Caco-2 (cell line): ENCODE measurements at regions of chr4 and their contacts with region 1.

Region 1: GRCh38 chr4:6695660-6696630 is 2.3 kb downstream of the S100P start:
- DNase-seq: peak; percentile 92 to 94
- H3K4me3 ChIP-seq: no peak overlapping the region
- H3K4me3 Mint-ChIP-seq: peak overlapping the region; percentile 77
- H3K27ac Mint-ChIP-seq: peak overlapping the region; percentile 92
- H3K4me1 ChIP-seq: peaks cover 40% of the 10 kb centered on the region
- H3K4me1 Mint-ChIP-seq: peaks cover 42% of the 10 kb centered on the region
- H3K27me3 ChIP-seq: no peaks in the 10 kb centered on the region
- H3K27me3 Mint-ChIP-seq: no peaks in the 10 kb centered on the region
- CTCF ChIP-seq: peak in 1 of 2 experiments; percentile 18

Region 2: GRCh38 chr4:5563856-5564255 is 1132.1 kb before region 1 on chr4:
- CTCF ChIA-PET with region 1: no interaction called
- POLR2A ChIA-PET with region 1: no interaction called
- intact Hi-C with region 1: no loop called
- DNase-seq: no peak
- H3K4me3 ChIP-seq: no peak overlapping the region
- H3K4me3 Mint-ChIP-seq: no peak overlapping the region
- H3K27ac Mint-ChIP-seq: no peak overlapping the region
- H3K4me1 ChIP-seq: no peaks in the 10 kb centered on the region
- H3K4me1 Mint-ChIP-seq: no peaks in the 10 kb centered on the region
- H3K27me3 ChIP-seq: no peaks in the 10 kb centered on the region
- H3K27me3 Mint-ChIP-seq: no peaks in the 10 kb centered on the region
- CTCF ChIP-seq: no peak

Region 3: DNA sequence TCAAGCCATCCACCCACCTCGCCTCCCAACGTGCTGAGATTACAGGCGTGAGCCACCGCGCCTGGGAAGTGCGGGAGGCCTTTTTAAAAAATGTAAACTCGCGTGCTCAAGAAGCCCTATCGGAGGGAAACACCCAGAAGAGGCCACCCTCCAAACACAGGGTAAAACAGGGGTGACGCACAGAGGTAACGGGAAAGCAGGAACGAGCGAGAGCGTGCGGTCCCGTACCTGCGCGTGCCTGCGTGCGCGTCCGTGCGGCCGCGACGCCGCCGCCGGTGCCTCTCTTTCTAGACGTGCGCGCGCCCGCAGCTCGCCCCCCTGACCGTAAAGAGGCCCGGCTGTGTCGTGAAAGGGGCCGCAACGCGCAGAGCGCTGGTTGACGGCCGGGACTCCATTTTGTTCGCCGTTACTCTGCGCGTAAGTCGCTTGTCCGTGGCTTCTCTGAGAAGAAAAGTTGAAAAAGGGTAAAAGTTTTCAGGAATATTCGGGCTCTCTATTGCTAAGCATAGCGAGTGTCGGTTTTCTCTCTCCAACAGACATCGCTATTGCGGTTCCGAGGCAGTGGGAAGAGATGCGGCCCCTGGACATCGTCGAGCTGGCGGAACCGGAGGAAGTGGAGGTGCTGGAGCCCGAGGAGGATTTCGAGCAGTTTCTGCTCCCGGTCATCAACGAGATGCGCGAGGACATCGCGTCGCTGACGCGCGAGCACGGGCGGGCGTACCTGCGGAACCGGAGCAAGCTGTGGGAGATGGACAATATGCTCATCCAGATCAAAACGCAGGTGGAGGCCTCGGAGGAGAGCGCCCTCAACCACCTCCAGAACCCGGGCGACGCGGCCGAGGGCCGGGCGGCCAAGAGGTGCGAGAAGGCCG is 55.4 kb before region 1 on chr4 and contains the start of gene MRFAP1:
- CTCF ChIA-PET with region 1: no interaction called
- POLR2A ChIA-PET with region 1: no interaction called
- intact Hi-C with region 1: loop called (anchors 1 kb)
- DNase-seq: peak; percentile 92 to 94
- H3K4me3 ChIP-seq: peak within 1 kb of the TSS; percentile 79
- H3K4me3 Mint-ChIP-seq: peak within 1 kb of the TSS; percentile 99
- H3K27ac Mint-ChIP-seq: peak within 1 kb of the TSS; percentile 99
- H3K4me1 ChIP-seq: peaks cover 4% of the 10 kb centered on the region; the same call in 1 of the 2 replicates
- H3K4me1 Mint-ChIP-seq: peaks cover 12% of the 10 kb centered on the region
- H3K27me3 ChIP-seq: no peaks in the 10 kb centered on the region
- H3K27me3 Mint-ChIP-seq: no peaks in the 10 kb centered on the region
- CTCF ChIP-seq: no peak
- total RNA-seq, gene MRFAP1: 245 and 254 TPM in 2 replicates

Region 4: GRCh38 chr4:6673660-6674499 is 22.1 kb before region 1 on chr4:
- CTCF ChIA-PET with region 1: interaction called, 60 read pairs
- POLR2A ChIA-PET with region 1: interaction called, 7 read pairs
- intact Hi-C with region 1: loop called (anchors 1 kb)
- DNase-seq: peak; percentile 94 to 95
- H3K4me3 ChIP-seq: peak overlapping the region; percentile 89
- H3K4me3 Mint-ChIP-seq: peak overlapping the region; percentile 84
- H3K27ac Mint-ChIP-seq: peak overlapping the region; percentile 93
- H3K4me1 ChIP-seq: peaks cover 16% of the 10 kb centered on the region
- H3K4me1 Mint-ChIP-seq: peaks cover 18% of the 10 kb centered on the region
- H3K27me3 ChIP-seq: no peaks in the 10 kb centered on the region
- H3K27me3 Mint-ChIP-seq: no peaks in the 10 kb centered on the region
- CTCF ChIP-seq: no peak